ENCODE measurements at regions of chr3 and their contacts with region 1.

Region 1: GRCh38 chr3:148955544-148956346 is 35.6 kb upstream of the GYG1 start:
- DNase-seq: peak in 1 of 2 experiments; percentile 53
- H3K4me3 ChIP-seq: no peak overlapping the region
- H3K27ac ChIP-seq: no peak overlapping the region
- H3K4me1 ChIP-seq: peaks cover 0 to 7% (median 4%) of the 10 kb centered on the region in 4 experiments; a peak in 4 of 7 replicates
- H3K27me3 ChIP-seq: no peaks in the 10 kb centered on the region
- CTCF ChIP-seq: peak in 2 of 3 experiments; percentile 50 to 63; a peak in 2 of 4 replicates
- EP300 ChIP-seq: no peak
- POLR2A ChIP-seq: no peak
- RAD21 ChIP-seq: peak; percentile 78 to 83

Region 2: GRCh38 chr3:148903941-148904340 is 51.8 kb before region 1 on chr3:
- CTCF ChIA-PET with region 1: no interaction called
- POLR2A ChIA-PET with region 1: no interaction called
- DNase-seq: no peak
- H3K4me3 ChIP-seq: no peak overlapping the region
- H3K27ac ChIP-seq: no peak overlapping the region
- H3K4me1 ChIP-seq: no peaks in the 10 kb centered on the region
- H3K27me3 ChIP-seq: no peaks in the 10 kb centered on the region
- CTCF ChIP-seq: no peak
- EP300 ChIP-seq: no peak
- POLR2A ChIP-seq: no peak
- RAD21 ChIP-seq: no peak

Region 3: GRCh38 chr3:148943506-148944205 is 12.1 kb before region 1 on chr3:
- CTCF ChIA-PET with region 1: interaction called, 17 read pairs
- POLR2A ChIA-PET with region 1: no interaction called
- DNase-seq: no peak
- H3K4me3 ChIP-seq: no peak overlapping the region
- H3K27ac ChIP-seq: no peak overlapping the region
- H3K4me1 ChIP-seq: no peaks in the 10 kb centered on the region
- H3K27me3 ChIP-seq: no peaks in the 10 kb centered on the region
- CTCF ChIP-seq: peak in 2 of 3 experiments; percentile 57 to 59; a peak in 3 of 4 replicates
- EP300 ChIP-seq: no peak
- POLR2A ChIP-seq: no peak
- RAD21 ChIP-seq: peak; percentile 87 to 89

Region 4: GRCh38 chr3:149026718-149027117 is 71.0 kb after region 1 on chr3:
- CTCF ChIA-PET with region 1: interaction called, 25 read pairs
- POLR2A ChIA-PET with region 1: interaction called, 5 read pairs
- DNase-seq: no peak
- H3K4me3 ChIP-seq: no peak overlapping the region
- H3K27ac ChIP-seq: no peak overlapping the region
- H3K4me1 ChIP-seq: peaks cover 2 to 7% (median 3%) of the 10 kb centered on the region in 4 experiments; a peak in 4 of 7 replicates
- H3K27me3 ChIP-seq: no peaks in the 10 kb centered on the region
- CTCF ChIP-seq: no peak
- EP300 ChIP-seq: no peak
- POLR2A ChIP-seq: no peak
- RAD21 ChIP-seq: no peak

Region 5: DNA sequence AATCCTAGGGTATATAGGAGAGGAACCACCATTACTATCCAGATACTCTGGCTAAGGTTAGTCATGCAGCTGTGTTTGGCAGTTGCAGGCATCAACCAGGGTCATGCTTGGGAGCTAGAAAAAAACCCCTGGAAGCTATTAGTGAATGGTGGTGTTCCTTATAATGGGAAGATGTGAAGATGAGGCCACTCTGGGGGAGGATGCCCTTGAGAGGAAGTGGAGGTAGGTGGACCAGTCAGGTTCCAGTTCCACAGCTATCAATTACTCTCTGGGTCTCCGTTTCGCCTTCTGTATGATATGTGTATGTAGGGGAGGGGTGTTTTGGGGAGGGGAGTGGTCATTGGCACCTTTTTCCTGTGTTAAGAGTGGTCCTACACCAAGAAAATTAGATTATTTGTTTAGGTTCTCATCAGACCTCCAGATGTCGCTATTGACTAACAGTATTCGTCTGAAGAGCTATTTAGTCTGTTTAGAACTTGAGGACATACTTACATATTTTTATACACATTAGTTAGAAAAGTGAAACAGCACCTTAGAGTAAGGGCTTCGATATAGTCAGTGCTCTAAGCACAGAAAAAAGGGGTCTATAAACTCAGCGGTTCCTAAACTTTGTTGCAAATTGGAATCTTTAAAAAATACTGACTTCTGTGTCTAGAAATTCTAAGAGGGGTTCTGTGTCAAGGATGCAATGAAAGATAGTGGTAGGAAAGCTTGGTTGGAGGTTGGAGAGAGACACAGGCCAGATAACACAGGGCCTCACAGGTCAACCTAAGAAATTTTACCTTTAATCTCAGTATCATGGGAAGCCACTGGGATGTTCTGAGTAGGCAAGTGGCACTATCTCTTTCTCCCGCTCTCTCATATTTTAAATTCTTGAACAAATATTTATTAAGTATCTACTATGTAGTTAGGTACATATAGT is 164.6 kb after region 1 on chr3:
- CTCF ChIA-PET with region 1: interaction called, 95 read pairs
- POLR2A ChIA-PET with region 1: no interaction called
- DNase-seq: no peak
- H3K4me3 ChIP-seq: no peak overlapping the region
- H3K27ac ChIP-seq: no peak overlapping the region
- H3K4me1 ChIP-seq: no peaks in the 10 kb centered on the region
- H3K27me3 ChIP-seq: no peaks in the 10 kb centered on the region
- CTCF ChIP-seq: peak in 2 of 3 experiments; percentile 49 to 60; a peak in 2 of 4 replicates
- EP300 ChIP-seq: no peak
- POLR2A ChIP-seq: no peak
- RAD21 ChIP-seq: peak; percentile 85 to 86

Region 6: DNA sequence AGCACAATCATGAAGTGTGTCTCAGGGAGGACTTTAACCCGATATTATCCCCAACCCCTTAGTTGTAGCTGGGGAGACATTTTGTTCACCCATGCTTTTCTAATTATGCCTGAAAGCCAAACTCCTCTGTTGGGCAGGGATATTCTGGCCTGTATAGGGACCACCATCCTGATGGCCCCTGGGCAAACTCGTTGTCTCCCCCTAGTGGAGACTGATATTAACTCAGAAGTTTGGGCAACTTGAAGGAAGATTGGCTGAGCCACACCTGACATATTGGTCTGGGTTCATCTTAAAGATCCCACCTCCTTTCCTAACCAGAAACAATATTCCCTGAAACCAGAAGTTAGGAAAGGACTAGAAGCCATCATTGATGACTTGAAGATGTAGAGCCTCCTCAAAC is 335.4 kb after region 1 on chr3:
- CTCF ChIA-PET with region 1: interaction called, 13 read pairs
- POLR2A ChIA-PET with region 1: no interaction called
- DNase-seq: no peak
- H3K4me3 ChIP-seq: no peak overlapping the region
- H3K27ac ChIP-seq: no peak overlapping the region
- H3K4me1 ChIP-seq: no peaks in the 10 kb centered on the region
- H3K27me3 ChIP-seq: no peaks in the 10 kb centered on the region
- CTCF ChIP-seq: peak; percentile 47 to 74 (median 57)
- EP300 ChIP-seq: no peak
- POLR2A ChIP-seq: no peak
- RAD21 ChIP-seq: peak; percentile 47 to 56

Region 7: GRCh38 chr3:149339931-149340309 is 384.2 kb after region 1 on chr3:
- CTCF ChIA-PET with region 1: interaction called, 13 read pairs
- POLR2A ChIA-PET with region 1: no interaction called
- DNase-seq: peak in 1 of 2 experiments; percentile 58
- H3K4me3 ChIP-seq: no peak overlapping the region
- H3K27ac ChIP-seq: no peak overlapping the region
- H3K4me1 ChIP-seq: peaks cover 0 to 3% (median 2%) of the 10 kb centered on the region in 4 experiments; a peak in 4 of 7 replicates
- H3K27me3 ChIP-seq: no peaks in the 10 kb centered on the region
- CTCF ChIP-seq: no peak
- EP300 ChIP-seq: no peak
- POLR2A ChIP-seq: no peak
- RAD21 ChIP-seq: no peak

Region 8: GRCh38 chr3:149487598-149488197 is 532.0 kb after region 1 on chr3:
- CTCF ChIA-PET with region 1: interaction called, 15 read pairs
- POLR2A ChIA-PET with region 1: no interaction called
- DNase-seq: peak in 1 of 2 experiments; percentile 85
- H3K4me3 ChIP-seq: no peak overlapping the region
- H3K27ac ChIP-seq: no peak overlapping the region
- H3K4me1 ChIP-seq: no peaks in the 10 kb centered on the region
- H3K27me3 ChIP-seq: no peaks in the 10 kb centered on the region
- CTCF ChIP-seq: peak; percentile 71 to 95 (median 92)
- EP300 ChIP-seq: no peak
- POLR2A ChIP-seq: no peak
- RAD21 ChIP-seq: peak; percentile 41 to 59